Caco-2 (cell line): ENCODE measurements at regions of chr15 and their contacts with region 1.

Region 1: GRCh38 chr15:89129123-89129815 is 41.0 kb downstream of the ABHD2 start:
- DNase-seq: peak in 1 of 2 experiments; percentile 53
- H3K4me3 ChIP-seq: no peak overlapping the region
- H3K4me3 Mint-ChIP-seq: no peak overlapping the region
- H3K27ac Mint-ChIP-seq: no peak overlapping the region
- H3K4me1 ChIP-seq: peaks cover 61% of the 10 kb centered on the region
- H3K4me1 Mint-ChIP-seq: peaks cover 40% of the 10 kb centered on the region
- H3K27me3 ChIP-seq: no peaks in the 10 kb centered on the region
- H3K27me3 Mint-ChIP-seq: no peaks in the 10 kb centered on the region
- CTCF ChIP-seq: peak; percentile 60 to 79

Region 2: DNA sequence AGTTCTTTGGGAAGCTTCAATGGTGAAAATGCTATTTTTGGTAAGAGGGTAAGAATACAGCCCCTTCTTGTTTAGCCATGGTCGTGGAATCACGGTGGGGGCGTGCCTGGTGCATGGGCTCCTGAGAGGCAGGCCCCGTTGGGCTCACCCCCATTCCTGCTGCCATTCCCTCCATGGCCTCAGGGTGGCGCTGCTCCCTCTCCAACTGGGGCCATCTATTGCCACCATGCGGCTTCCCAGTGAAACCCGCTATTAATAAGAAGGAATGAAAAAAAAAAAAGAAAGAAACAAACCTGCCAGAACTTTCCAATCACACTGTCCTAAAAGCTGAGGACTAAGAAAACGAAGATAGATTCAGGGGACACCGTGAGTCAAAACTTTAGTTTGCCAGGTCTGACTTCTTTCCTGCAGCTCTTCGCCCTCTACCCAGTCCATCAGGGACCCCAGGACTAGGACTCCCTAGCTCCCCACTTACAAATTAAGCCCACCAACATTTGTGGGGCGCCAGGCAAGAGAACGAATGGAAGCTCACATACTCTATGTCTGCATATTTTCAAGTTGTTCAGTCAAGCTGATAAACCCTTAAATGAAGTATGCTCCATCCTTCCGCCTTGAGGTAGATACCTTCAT is 71.7 kb before region 1 on chr15:
- CTCF ChIA-PET with region 1: interaction called, 8 read pairs
- POLR2A ChIA-PET with region 1: no interaction called
- intact Hi-C with region 1: loop called (anchors 1 kb)
- DNase-seq: peak; percentile 77 to 89
- H3K4me3 ChIP-seq: no peak overlapping the region
- H3K4me3 Mint-ChIP-seq: no peak overlapping the region
- H3K27ac Mint-ChIP-seq: no peak overlapping the region
- H3K4me1 ChIP-seq: no peaks in the 10 kb centered on the region; the same call in 1 of the 2 replicates
- H3K4me1 Mint-ChIP-seq: peaks cover 5% of the 10 kb centered on the region
- H3K27me3 ChIP-seq: no peaks in the 10 kb centered on the region
- H3K27me3 Mint-ChIP-seq: no peaks in the 10 kb centered on the region
- CTCF ChIP-seq: peak; percentile 97

Region 3: DNA sequence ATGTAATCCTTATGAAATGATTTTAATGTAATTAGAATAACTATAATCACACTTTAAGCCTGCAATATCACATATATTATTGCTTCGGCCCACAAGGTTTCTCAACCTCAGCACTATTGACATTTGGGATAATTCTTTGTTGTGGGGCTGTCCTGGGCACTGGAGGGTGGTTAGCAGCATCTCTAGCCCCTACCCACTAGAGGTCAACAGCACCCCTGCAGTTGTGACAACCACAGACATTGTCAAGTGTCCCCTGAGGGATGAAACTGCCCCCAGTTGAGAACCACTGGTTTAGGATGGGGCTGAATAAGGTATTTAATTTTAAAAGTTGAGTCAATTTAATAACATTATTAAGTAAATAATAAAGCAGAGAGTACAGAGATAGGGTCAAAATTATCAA is 47.4 kb before region 1 on chr15:
- CTCF ChIA-PET with region 1: no interaction called
- POLR2A ChIA-PET with region 1: no interaction called
- intact Hi-C with region 1: loop called (anchors 1 kb)
- DNase-seq: no peak
- H3K4me3 ChIP-seq: no peak overlapping the region
- H3K4me3 Mint-ChIP-seq: no peak overlapping the region
- H3K27ac Mint-ChIP-seq: no peak overlapping the region
- H3K4me1 ChIP-seq: no peaks in the 10 kb centered on the region; the same call in 1 of the 2 replicates
- H3K4me1 Mint-ChIP-seq: peaks cover 6% of the 10 kb centered on the region
- H3K27me3 ChIP-seq: no peaks in the 10 kb centered on the region
- H3K27me3 Mint-ChIP-seq: no peaks in the 10 kb centered on the region
- CTCF ChIP-seq: no peak

Region 4: GRCh38 chr15:89087830-89088604 is 41.3 kb before region 1 on chr15 and contains the start of gene ABHD2:
- CTCF ChIA-PET with region 1: interaction called, 10 read pairs
- POLR2A ChIA-PET with region 1: interaction called, 3 read pairs
- intact Hi-C with region 1: loop called (anchors 1 kb)
- DNase-seq: peak; percentile 98 to 99
- H3K4me3 ChIP-seq: peak within 1 kb of the TSS; percentile 61
- H3K4me3 Mint-ChIP-seq: no peak within 1 kb of the TSS
- H3K27ac Mint-ChIP-seq: no peak within 1 kb of the TSS
- H3K4me1 ChIP-seq: peaks cover 14% of the 10 kb centered on the region; the same call in 1 of the 2 replicates
- H3K4me1 Mint-ChIP-seq: peaks cover 8% of the 10 kb centered on the region
- H3K27me3 ChIP-seq: no peaks in the 10 kb centered on the region
- H3K27me3 Mint-ChIP-seq: no peaks in the 10 kb centered on the region
- CTCF ChIP-seq: no peak
- total RNA-seq, gene ABHD2: 56.4 and 63.0 TPM in 2 replicates